Naive thymus-derived CD4-positive, alpha-beta T cell (primary cell): ENCODE measurements at regions of chr2 and their contacts with region 1.

Region 1: DNA sequence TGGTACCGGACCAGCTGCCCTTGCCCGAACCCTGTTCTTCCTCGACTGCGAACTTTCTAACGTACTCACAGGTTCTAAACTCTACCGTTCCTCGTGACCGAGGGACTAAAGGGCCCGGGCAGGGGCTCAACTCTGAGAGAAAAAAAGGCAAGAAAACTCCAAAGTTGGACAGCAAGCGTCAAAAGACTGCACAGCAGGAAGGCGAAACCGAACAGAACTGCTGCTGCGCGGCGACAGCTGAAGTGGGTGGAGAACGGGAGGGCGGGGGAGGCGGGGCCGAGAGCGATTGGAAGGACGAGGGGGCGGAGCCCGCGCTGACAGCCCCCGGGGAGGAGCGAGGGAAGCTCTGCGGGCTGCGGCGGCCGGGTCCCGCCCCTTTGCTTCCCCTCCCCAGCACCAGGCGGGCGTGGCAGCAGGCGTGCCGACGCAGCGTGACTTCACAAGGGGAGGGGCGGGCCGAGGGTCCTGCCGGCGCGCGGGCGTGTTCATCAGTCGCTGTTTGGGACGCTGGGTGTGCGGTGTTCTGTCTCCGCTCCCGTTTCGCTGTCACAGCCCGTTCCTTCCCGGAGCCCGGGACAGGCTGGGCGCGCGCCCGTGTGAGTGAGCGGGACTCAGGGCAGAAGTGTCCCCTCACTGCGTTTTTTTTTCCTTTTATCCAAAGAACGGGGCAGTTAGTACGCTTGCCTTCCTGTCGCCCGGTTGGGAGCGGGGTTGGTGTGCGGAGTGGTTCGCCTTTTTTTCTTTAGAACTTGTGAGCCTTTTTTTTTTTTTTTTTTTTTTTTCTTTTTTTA is at the start of gene NABP1:
- DNase-seq: peak; percentile 98 to 99 (median 98)
- ATAC-seq: peak; percentile 95
- H3K4me3 ChIP-seq: peak within 1 kb of the TSS; percentile 90
- H3K4me3 Mint-ChIP-seq: peak within 1 kb of the TSS; percentile 87 to 99 (median 96)
- H3K27ac ChIP-seq: peak within 1 kb of the TSS; percentile 92
- H3K27ac Mint-ChIP-seq: peak within 1 kb of the TSS; percentile 97 to 100 (median 99)
- H3K4me1 ChIP-seq: peaks cover 49 to 51% of the 10 kb centered on the region in 2 donors
- H3K4me1 Mint-ChIP-seq: peaks cover 30 to 74% (median 63%) of the 10 kb centered on the region in 7 donors
- H3K27me3 ChIP-seq: no peaks in the 10 kb centered on the region
- H3K27me3 Mint-ChIP-seq: peaks cover 0 to 2% (median 0%) of the 10 kb centered on the region in 5 donors
- total RNA-seq, gene NABP1: 24.5 to 79.5 (median 55.4) TPM

Region 2: GRCh38 chr2:189762551-189763298 is 1915.1 kb before region 1 on chr2 and contains the start of gene OSGEPL1:
- CTCF ChIA-PET with region 1: no interaction called
- POLR2A ChIA-PET with region 1: no interaction called
- intact Hi-C with region 1: loop called in 1 of 2 experiments (anchors 5 kb)
- DNase-seq: peak; percentile 72 to 95 (median 88)
- ATAC-seq: peak; percentile 95
- H3K4me3 ChIP-seq: peak within 1 kb of the TSS; percentile 88
- H3K4me3 Mint-ChIP-seq: peak within 1 kb of the TSS; percentile 88 to 98 (median 94)
- H3K27ac ChIP-seq: peak within 1 kb of the TSS; percentile 89
- H3K27ac Mint-ChIP-seq: peak within 1 kb of the TSS; percentile 94 to 98 (median 96)
- H3K4me1 ChIP-seq: peaks cover 6 to 10% of the 10 kb centered on the region in 2 donors
- H3K4me1 Mint-ChIP-seq: peaks cover 4 to 18% (median 9%) of the 10 kb centered on the region in 7 donors
- H3K27me3 ChIP-seq: no peaks in the 10 kb centered on the region
- H3K27me3 Mint-ChIP-seq: no peaks in the 10 kb centered on the region
- total RNA-seq, gene OSGEPL1: 6.8 to 24.2 (median 7.2) TPM

Region 3: GRCh38 chr2:191020221-191020741 is 657.6 kb before region 1 on chr2:
- CTCF ChIA-PET with region 1: no interaction called
- POLR2A ChIA-PET with region 1: interaction called, 3 read pairs
- intact Hi-C with region 1: loop called in 1 of 2 experiments (anchors 1 kb)
- DNase-seq: peak; percentile 89 to 99 (median 94)
- ATAC-seq: peak; percentile 88
- H3K4me3 ChIP-seq: peak overlapping the region; percentile 78
- H3K4me3 Mint-ChIP-seq: no peak overlapping the region
- H3K27ac ChIP-seq: peak overlapping the region; percentile 82
- H3K27ac Mint-ChIP-seq: no peak overlapping the region
- H3K4me1 ChIP-seq: peaks cover 44 to 48% of the 10 kb centered on the region in 2 donors
- H3K4me1 Mint-ChIP-seq: peaks cover 11 to 46% (median 32%) of the 10 kb centered on the region in 7 donors
- H3K27me3 ChIP-seq: no peaks in the 10 kb centered on the region
- H3K27me3 Mint-ChIP-seq: peaks cover 0 to 2% (median 0%) of the 10 kb centered on the region in 5 donors

Region 4: DNA sequence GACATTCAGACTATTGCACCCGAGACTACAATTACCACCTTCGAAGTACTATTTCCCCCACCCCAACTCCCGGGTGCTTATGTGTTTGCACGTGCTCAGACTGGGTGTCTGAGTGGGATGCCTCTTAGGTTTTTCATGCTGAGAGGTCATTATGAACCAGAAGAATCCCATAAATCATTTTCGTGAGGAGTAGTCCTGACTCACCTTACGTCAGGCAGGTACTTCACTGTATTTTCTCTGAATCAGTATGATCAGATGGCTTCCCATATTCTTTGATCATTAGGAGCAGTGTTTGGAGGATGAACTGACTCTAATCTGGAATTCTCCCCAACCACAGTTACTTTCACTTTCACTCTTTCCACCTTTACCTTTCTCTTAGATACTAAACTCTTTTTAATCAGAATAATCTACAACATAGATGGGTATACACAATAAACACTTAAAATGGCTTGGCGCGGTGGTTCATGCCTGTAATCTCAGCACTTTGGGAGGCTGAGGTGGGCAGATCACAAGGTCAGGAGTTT is 488.7 kb before region 1 on chr2:
- CTCF ChIA-PET with region 1: no interaction called
- POLR2A ChIA-PET with region 1: interaction called, 3 read pairs
- intact Hi-C with region 1: loop called in 1 of 2 experiments (anchors 5 kb)
- DNase-seq: peak in 3 of 9 donors; percentile 13 to 20 (median 14)
- ATAC-seq: no peak
- H3K4me3 ChIP-seq: peak overlapping the region; percentile 40
- H3K4me3 Mint-ChIP-seq: peak overlapping the region; percentile 70 to 91 (median 83)
- H3K27ac ChIP-seq: peak overlapping the region; percentile 21
- H3K27ac Mint-ChIP-seq: peak overlapping the region; percentile 59 to 95 (median 91)
- H3K4me1 ChIP-seq: peaks cover 19 to 20% of the 10 kb centered on the region in 2 donors
- H3K4me1 Mint-ChIP-seq: peaks cover 17 to 69% (median 61%) of the 10 kb centered on the region in 7 donors
- H3K27me3 ChIP-seq: no peaks in the 10 kb centered on the region
- H3K27me3 Mint-ChIP-seq: no peaks in the 10 kb centered on the region

Region 5: DNA sequence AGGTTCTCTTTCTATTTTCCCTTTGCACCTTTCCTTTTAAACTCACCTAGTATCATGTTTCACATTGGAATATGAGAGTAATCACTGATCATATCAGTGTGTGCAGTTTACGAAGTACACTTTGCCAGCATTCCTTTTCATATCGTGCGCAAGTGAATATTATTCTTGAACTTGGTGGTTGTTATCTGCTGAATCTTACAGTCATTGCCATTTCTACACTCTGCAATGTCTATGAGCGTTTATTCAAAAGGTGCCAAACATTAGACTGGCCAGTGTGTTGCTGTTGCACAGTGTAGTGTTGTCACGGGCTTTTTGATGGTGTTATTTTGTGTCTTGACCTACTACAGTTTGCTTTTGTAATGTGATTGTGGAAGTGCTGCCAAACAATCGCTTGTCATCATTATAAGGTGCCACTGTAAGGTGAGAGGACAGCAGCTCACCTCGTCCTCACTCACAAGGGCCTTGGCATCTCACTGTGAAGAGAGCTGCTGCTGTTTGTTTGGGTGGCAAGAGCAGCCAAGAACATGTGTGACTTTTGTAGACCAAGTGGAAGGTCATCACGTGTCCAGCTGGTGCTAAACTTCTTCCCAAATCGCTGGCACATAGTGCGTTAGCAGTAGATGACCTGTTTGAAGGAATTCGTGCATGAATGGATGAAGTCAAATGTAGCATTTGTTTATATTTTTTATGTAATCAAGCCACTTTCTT is 319.4 kb before region 1 on chr2:
- CTCF ChIA-PET with region 1: no interaction called
- POLR2A ChIA-PET with region 1: no interaction called
- intact Hi-C with region 1: no loop called
- DNase-seq: no peak
- ATAC-seq: no peak
- H3K4me3 ChIP-seq: no peak overlapping the region
- H3K4me3 Mint-ChIP-seq: no peak overlapping the region
- H3K27ac ChIP-seq: no peak overlapping the region
- H3K27ac Mint-ChIP-seq: no peak overlapping the region
- H3K4me1 ChIP-seq: no peaks in the 10 kb centered on the region
- H3K4me1 Mint-ChIP-seq: no peaks in the 10 kb centered on the region
- H3K27me3 ChIP-seq: no peaks in the 10 kb centered on the region
- H3K27me3 Mint-ChIP-seq: peaks cover 0 to 29% (median 0%) of the 10 kb centered on the region in 5 donors

Region 6: GRCh38 chr2:191617575-191617974 is 60.3 kb before region 1 on chr2:
- CTCF ChIA-PET with region 1: interaction called, 8 read pairs
- POLR2A ChIA-PET with region 1: interaction called, 173 read pairs
- intact Hi-C with region 1: loop called (anchors 1 kb)
- DNase-seq: peak in 8 of 9 donors; percentile 47 to 89 (median 84)
- ATAC-seq: peak; percentile 92
- H3K4me3 ChIP-seq: peak overlapping the region; percentile 11
- H3K4me3 Mint-ChIP-seq: peak overlapping the region; percentile 0 to 71 (median 40)
- H3K27ac ChIP-seq: peak overlapping the region; percentile 84
- H3K27ac Mint-ChIP-seq: peak overlapping the region; percentile 80 to 98 (median 89)
- H3K4me1 ChIP-seq: peaks cover 21 to 22% of the 10 kb centered on the region in 2 donors
- H3K4me1 Mint-ChIP-seq: peaks cover 31 to 59% (median 51%) of the 10 kb centered on the region in 7 donors
- H3K27me3 ChIP-seq: no peaks in the 10 kb centered on the region
- H3K27me3 Mint-ChIP-seq: no peaks in the 10 kb centered on the region

Region 7: DNA sequence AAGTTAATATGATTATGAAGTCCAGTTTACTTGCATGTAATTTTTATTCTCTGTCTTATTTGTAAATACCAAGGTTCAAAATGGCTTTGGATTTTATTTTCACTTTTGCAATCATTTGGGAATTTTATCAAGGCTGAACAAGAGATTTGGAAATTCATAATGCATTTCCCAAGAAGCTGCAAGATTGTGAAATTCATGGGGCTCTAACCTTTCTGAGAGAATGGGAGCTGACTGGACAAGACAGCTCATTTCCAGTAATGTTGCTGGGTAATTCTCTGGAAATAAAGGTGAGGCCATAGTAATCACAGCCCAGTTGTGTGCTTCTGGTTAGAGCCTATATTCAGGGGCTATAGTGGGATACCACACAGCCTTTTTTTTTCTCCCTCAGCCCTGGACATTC is 21.4 kb before region 1 on chr2:
- CTCF ChIA-PET with region 1: interaction called, 3 read pairs
- POLR2A ChIA-PET with region 1: interaction called, 12 read pairs
- intact Hi-C with region 1: loop called in 1 of 2 experiments (anchors 2 kb)
- DNase-seq: no peak
- ATAC-seq: no peak
- H3K4me3 ChIP-seq: no peak overlapping the region
- H3K4me3 Mint-ChIP-seq: no peak overlapping the region
- H3K27ac ChIP-seq: no peak overlapping the region
- H3K27ac Mint-ChIP-seq: no peak overlapping the region
- H3K4me1 ChIP-seq: no peaks in the 10 kb centered on the region
- H3K4me1 Mint-ChIP-seq: peaks cover 0 to 5% (median 0%) of the 10 kb centered on the region in 7 donors
- H3K27me3 ChIP-seq: no peaks in the 10 kb centered on the region
- H3K27me3 Mint-ChIP-seq: peaks cover 0 to 2% (median 0%) of the 10 kb centered on the region in 5 donors

Region 8: GRCh38 chr2:191705084-191705483 is 27.2 kb after region 1 on chr2:
- CTCF ChIA-PET with region 1: no interaction called
- POLR2A ChIA-PET with region 1: no interaction called
- intact Hi-C with region 1: no loop called
- DNase-seq: no peak
- ATAC-seq: no peak
- H3K4me3 ChIP-seq: no peak overlapping the region
- H3K4me3 Mint-ChIP-seq: no peak overlapping the region
- H3K27ac ChIP-seq: no peak overlapping the region
- H3K27ac Mint-ChIP-seq: peak overlapping the region in 1 of 9 donors; percentile 14
- H3K4me1 ChIP-seq: no peaks in the 10 kb centered on the region
- H3K4me1 Mint-ChIP-seq: peaks cover 0 to 5% (median 0%) of the 10 kb centered on the region in 7 donors
- H3K27me3 ChIP-seq: no peaks in the 10 kb centered on the region
- H3K27me3 Mint-ChIP-seq: no peaks in the 10 kb centered on the region

Region 9: DNA sequence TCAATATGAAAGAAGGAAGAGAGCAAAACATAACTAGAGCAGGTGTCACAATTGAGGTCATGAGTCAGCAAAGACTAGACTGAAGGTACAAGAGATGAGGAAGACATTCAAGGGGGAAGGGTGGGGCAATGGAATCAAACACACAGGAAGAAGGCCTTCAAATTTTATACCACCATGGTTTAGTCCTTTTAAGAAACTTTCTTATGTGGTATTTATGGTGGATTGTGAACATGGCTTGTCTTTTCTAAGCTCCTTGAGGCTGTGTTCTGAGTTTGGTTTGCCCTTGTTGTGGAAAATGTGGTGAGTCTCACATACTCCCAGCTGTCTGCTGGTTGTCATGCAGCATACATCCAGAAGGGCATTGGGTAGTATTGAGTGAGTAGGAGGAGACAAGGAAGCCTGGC is 62.2 kb after region 1 on chr2:
- CTCF ChIA-PET with region 1: no interaction called
- POLR2A ChIA-PET with region 1: no interaction called
- intact Hi-C with region 1: loop called (anchors 1 kb)
- DNase-seq: peak in 8 of 9 donors; percentile 42 to 83 (median 78)
- ATAC-seq: peak; percentile 95
- H3K4me3 ChIP-seq: no peak overlapping the region
- H3K4me3 Mint-ChIP-seq: peak overlapping the region; percentile 0 to 62 (median 21)
- H3K27ac ChIP-seq: no peak overlapping the region
- H3K27ac Mint-ChIP-seq: peak overlapping the region; percentile 0 to 89 (median 44)
- H3K4me1 ChIP-seq: peaks cover 14% of the 10 kb centered on the region in 2 donors
- H3K4me1 Mint-ChIP-seq: peaks cover 13 to 18% (median 13%) of the 10 kb centered on the region in 7 donors
- H3K27me3 ChIP-seq: no peaks in the 10 kb centered on the region
- H3K27me3 Mint-ChIP-seq: peaks cover 10 to 45% (median 21%) of the 10 kb centered on the region in 5 donors

Region 10: GRCh38 chr2:192070099-192070498 is 392.3 kb after region 1 on chr2:
- CTCF ChIA-PET with region 1: no interaction called
- POLR2A ChIA-PET with region 1: no interaction called
- intact Hi-C with region 1: no loop called
- DNase-seq: no peak
- ATAC-seq: no peak
- H3K4me3 ChIP-seq: no peak overlapping the region
- H3K4me3 Mint-ChIP-seq: no peak overlapping the region
- H3K27ac ChIP-seq: no peak overlapping the region
- H3K27ac Mint-ChIP-seq: no peak overlapping the region
- H3K4me1 ChIP-seq: peaks cover 0 to 5% of the 10 kb centered on the region in 2 donors
- H3K4me1 Mint-ChIP-seq: peaks cover 6 to 22% (median 15%) of the 10 kb centered on the region in 7 donors
- H3K27me3 ChIP-seq: no peaks in the 10 kb centered on the region
- H3K27me3 Mint-ChIP-seq: peaks cover 2 to 28% (median 7%) of the 10 kb centered on the region in 5 donors